GM12878 (cell line): ENCODE measurements at regions of chr11 and their contacts with region 1.

Region 1: DNA sequence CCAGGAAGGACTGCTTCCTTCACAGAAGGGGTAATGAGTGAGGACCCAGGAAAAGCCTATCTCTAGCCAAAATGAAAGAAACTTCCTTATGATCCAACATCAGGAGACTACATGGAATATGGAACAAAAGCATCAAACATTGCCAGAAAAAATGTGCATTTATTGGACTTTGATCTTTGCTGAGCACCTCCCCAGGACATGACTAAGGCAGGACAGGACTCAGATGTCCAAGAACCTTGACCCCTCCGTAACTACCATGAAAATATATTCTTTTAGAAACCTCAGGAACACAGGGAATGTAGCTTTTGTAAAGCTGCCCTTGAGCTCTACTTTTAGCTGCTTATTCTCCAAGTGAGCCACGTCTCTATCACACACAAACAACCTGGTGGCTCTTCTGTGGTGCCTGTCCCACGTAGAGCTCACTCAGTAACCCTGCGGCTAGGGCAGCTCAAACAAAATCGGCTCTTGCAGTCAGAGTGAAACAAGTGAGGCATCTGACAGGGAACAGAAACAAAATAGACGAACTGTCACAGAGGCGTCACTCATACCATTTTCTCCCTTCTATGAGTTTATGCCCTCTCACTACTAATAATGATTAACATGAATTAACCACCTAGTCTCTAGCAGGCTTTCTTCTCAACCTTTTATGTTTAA is 471.5 kb upstream of the API5 start:
- DNase-seq: peak; percentile 25
- ATAC-seq: peak; percentile 96
- H3K4me3 ChIP-seq: no peak overlapping the region
- H3K27ac ChIP-seq: no peak overlapping the region
- H3K4me1 ChIP-seq: no peaks in the 10 kb centered on the region
- H3K27me3 ChIP-seq: no peaks in the 10 kb centered on the region
- CTCF ChIP-seq: no peak
- EP300 ChIP-seq: peak; percentile 88 to 93; a peak in 3 of 4 replicates
- POLR2A ChIP-seq: no peak
- RAD21 ChIP-seq: no peak

Region 2: GRCh38 chr11:42770444-42771065 is 69.7 kb before region 1 on chr11:
- CTCF ChIA-PET with region 1: interaction called, 10 read pairs
- POLR2A ChIA-PET with region 1: no interaction called
- RAD21 ChIA-PET with region 1: interaction called, 7 read pairs
- SMC1A ChIA-PET with region 1: interaction called, 7 read pairs
- in situ Hi-C with region 1: no loop called
- intact Hi-C with region 1: loop called (anchors 2 kb)
- DNase-seq: no peak
- ATAC-seq: peak; percentile 90
- H3K4me3 ChIP-seq: no peak overlapping the region
- H3K27ac ChIP-seq: no peak overlapping the region
- H3K4me1 ChIP-seq: no peaks in the 10 kb centered on the region
- H3K27me3 ChIP-seq: no peaks in the 10 kb centered on the region
- CTCF ChIP-seq: peak; percentile 69 to 77 (median 72)
- EP300 ChIP-seq: no peak
- POLR2A ChIP-seq: no peak
- RAD21 ChIP-seq: peak; percentile 77

Region 3: DNA sequence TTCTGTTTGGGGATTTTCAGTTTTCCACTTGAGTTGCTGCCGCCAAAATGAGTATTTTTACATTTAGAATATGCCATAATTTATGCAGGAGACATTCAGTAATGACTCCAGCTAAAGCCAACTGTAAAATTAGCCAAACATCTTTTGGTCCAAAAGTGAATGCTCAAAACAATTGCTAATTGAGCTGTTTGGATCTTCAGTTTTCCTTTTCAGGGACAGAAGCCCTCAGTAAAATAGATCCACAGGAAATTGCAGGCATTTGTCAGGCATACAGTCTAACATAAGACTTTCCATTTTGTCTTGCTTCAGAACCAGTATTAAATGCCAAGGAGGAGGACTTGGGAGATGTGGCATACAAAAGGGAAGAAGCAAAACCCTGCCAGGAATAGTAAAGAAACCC is 53.3 kb before region 1 on chr11:
- CTCF ChIA-PET with region 1: no interaction called
- POLR2A ChIA-PET with region 1: no interaction called
- RAD21 ChIA-PET with region 1: interaction called, 17 read pairs
- SMC1A ChIA-PET with region 1: interaction called, 6 read pairs
- in situ Hi-C with region 1: no loop called
- intact Hi-C with region 1: no loop called
- DNase-seq: no peak
- ATAC-seq: no peak
- H3K4me3 ChIP-seq: no peak overlapping the region
- H3K27ac ChIP-seq: no peak overlapping the region
- H3K4me1 ChIP-seq: no peaks in the 10 kb centered on the region
- H3K27me3 ChIP-seq: no peaks in the 10 kb centered on the region
- CTCF ChIP-seq: no peak
- EP300 ChIP-seq: no peak
- POLR2A ChIP-seq: no peak
- RAD21 ChIP-seq: no peak

Region 4: DNA sequence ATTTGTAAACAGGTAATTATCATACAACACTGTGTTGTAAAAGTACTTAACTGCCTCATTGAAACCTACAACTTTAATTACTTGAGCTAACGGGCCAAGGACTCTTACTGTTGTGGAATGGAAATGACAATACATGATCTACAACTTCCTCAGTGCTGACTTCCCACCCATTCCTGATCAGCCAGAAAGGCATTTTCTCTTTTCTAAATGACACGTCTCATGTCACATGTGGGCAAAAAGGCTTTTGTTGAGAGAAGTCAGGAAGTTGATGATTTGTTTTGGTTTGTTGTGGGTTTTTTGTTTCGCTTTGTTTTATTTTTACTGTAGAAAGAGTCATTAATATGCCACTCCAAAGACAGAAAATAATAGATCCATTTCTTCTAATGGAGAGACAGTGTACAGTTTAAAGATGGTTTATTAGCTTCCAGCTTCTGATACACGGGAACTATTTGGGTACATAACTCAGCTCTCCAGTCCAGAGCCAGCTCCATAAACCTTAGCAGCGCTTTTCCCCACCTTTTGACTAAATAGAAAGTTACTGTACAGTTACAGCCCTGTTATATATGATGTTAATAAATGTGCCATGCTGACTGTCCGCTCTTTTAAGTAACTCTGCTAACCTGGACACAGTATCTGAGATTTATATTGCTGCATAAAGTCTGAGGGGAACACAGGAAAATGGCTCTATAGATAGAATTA is 38.0 kb before region 1 on chr11:
- CTCF ChIA-PET with region 1: interaction called, 6 read pairs
- POLR2A ChIA-PET with region 1: interaction called, 4 read pairs
- RAD21 ChIA-PET with region 1: interaction called, 15 read pairs
- SMC1A ChIA-PET with region 1: interaction called, 17 read pairs
- in situ Hi-C with region 1: no loop called
- intact Hi-C with region 1: no loop called
- DNase-seq: no peak
- ATAC-seq: peak; percentile 63
- H3K4me3 ChIP-seq: no peak overlapping the region
- H3K27ac ChIP-seq: no peak overlapping the region
- H3K4me1 ChIP-seq: no peaks in the 10 kb centered on the region
- H3K27me3 ChIP-seq: no peaks in the 10 kb centered on the region
- CTCF ChIP-seq: no peak
- EP300 ChIP-seq: no peak
- POLR2A ChIP-seq: no peak
- RAD21 ChIP-seq: no peak

Region 5: GRCh38 chr11:42812361-42812760 is 27.9 kb before region 1 on chr11:
- CTCF ChIA-PET with region 1: interaction called, 4 read pairs
- POLR2A ChIA-PET with region 1: interaction called, 8 read pairs
- RAD21 ChIA-PET with region 1: interaction called, 15 read pairs
- SMC1A ChIA-PET with region 1: interaction called, 23 read pairs
- in situ Hi-C with region 1: no loop called
- intact Hi-C with region 1: no loop called
- DNase-seq: no peak
- ATAC-seq: peak; percentile 48; the same call in 2 of the 3 replicates
- H3K4me3 ChIP-seq: no peak overlapping the region
- H3K27ac ChIP-seq: no peak overlapping the region
- H3K4me1 ChIP-seq: no peaks in the 10 kb centered on the region
- H3K27me3 ChIP-seq: no peaks in the 10 kb centered on the region
- CTCF ChIP-seq: no peak
- EP300 ChIP-seq: no peak
- POLR2A ChIP-seq: no peak
- RAD21 ChIP-seq: no peak

Region 6: GRCh38 chr11:42825598-42825997 is 14.7 kb before region 1 on chr11:
- CTCF ChIA-PET with region 1: interaction called, 4 read pairs
- POLR2A ChIA-PET with region 1: interaction called, 4 read pairs
- RAD21 ChIA-PET with region 1: interaction called, 7 read pairs
- SMC1A ChIA-PET with region 1: interaction called, 11 read pairs
- in situ Hi-C with region 1: no loop called
- intact Hi-C with region 1: no loop called
- DNase-seq: no peak
- ATAC-seq: no peak
- H3K4me3 ChIP-seq: no peak overlapping the region
- H3K27ac ChIP-seq: no peak overlapping the region
- H3K4me1 ChIP-seq: no peaks in the 10 kb centered on the region
- H3K27me3 ChIP-seq: no peaks in the 10 kb centered on the region
- CTCF ChIP-seq: no peak
- EP300 ChIP-seq: no peak
- POLR2A ChIP-seq: no peak
- RAD21 ChIP-seq: no peak

Region 7: GRCh38 chr11:42857344-42857743 is 17.0 kb after region 1 on chr11:
- CTCF ChIA-PET with region 1: interaction called, 10 read pairs
- POLR2A ChIA-PET with region 1: no interaction called
- RAD21 ChIA-PET with region 1: interaction called, 4 read pairs
- SMC1A ChIA-PET with region 1: interaction called, 37 read pairs
- in situ Hi-C with region 1: no loop called
- intact Hi-C with region 1: no loop called
- DNase-seq: no peak
- ATAC-seq: no peak; the same call in 2 of the 3 replicates
- H3K4me3 ChIP-seq: no peak overlapping the region
- H3K27ac ChIP-seq: no peak overlapping the region
- H3K4me1 ChIP-seq: no peaks in the 10 kb centered on the region
- H3K27me3 ChIP-seq: no peaks in the 10 kb centered on the region
- CTCF ChIP-seq: no peak
- EP300 ChIP-seq: no peak; a peak in 1 of 4 replicates
- POLR2A ChIP-seq: no peak
- RAD21 ChIP-seq: no peak

Region 8: DNA sequence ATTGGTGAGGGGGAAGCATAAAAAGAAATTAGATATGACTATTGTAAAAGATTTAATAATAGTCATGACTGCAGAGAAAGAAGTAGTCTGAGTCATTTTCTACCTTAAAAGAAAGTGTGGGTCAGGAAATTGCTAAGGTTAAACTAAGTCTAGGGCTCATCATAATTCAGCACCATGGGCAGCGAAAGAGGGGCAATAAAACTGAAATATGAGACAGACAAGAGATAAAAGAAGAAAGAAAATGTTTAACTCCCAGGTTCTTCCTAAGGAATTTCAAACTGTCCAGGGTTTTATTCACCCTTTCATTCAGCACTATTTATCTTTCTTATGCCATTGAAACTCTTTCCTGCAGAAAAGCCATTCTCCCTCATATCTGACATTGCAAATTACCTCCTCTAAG is 357.1 kb after region 1 on chr11:
- CTCF ChIA-PET with region 1: no interaction called
- POLR2A ChIA-PET with region 1: no interaction called
- RAD21 ChIA-PET with region 1: no interaction called
- SMC1A ChIA-PET with region 1: no interaction called
- in situ Hi-C with region 1: no loop called
- intact Hi-C with region 1: no loop called
- DNase-seq: no peak
- ATAC-seq: no peak
- H3K4me3 ChIP-seq: no peak overlapping the region
- H3K27ac ChIP-seq: no peak overlapping the region
- H3K4me1 ChIP-seq: no peaks in the 10 kb centered on the region
- H3K27me3 ChIP-seq: no peaks in the 10 kb centered on the region
- CTCF ChIP-seq: no peak
- EP300 ChIP-seq: no peak
- POLR2A ChIP-seq: no peak
- RAD21 ChIP-seq: no peak